Breast epithelium (tissue), 4 donors: ENCODE measurements at regions of chr13 and their contacts with region 1.

Region 1: GRCh38 chr13:31733647-31734046 is 5.7 kb upstream of the RXFP2 start:
- DNase-seq: no peak
- H3K4me3 ChIP-seq: no peak overlapping the region
- H3K27ac ChIP-seq: no peak overlapping the region
- H3K4me1 ChIP-seq: no peaks in the 10 kb centered on the region
- H3K27me3 ChIP-seq: no peaks in the 10 kb centered on the region
- CTCF ChIP-seq: no peak
- POLR2A ChIP-seq: no peak

Region 2: DNA sequence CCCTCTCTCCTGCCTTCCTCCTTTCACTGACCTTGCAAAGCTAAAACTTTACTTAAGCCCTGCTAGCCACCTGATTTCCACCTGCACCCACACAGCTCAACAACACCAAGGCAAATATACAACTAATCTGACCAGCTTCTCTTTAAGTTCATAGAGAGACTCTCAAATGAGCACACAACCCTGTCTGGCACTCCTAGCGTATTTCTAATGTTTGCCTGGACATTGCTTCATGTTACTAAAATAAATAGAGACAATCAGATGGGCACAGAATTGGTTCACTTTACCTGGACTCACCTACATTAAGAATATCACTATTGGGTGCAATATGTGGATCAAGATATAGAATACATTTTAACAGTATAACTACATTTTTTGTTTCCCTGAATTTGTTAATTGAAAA is 27.5 kb before region 1 on chr13:
- intact Hi-C with region 1: loop called (anchors 2 kb)
- DNase-seq: no peak
- H3K4me3 ChIP-seq: no peak overlapping the region
- H3K27ac ChIP-seq: no peak overlapping the region
- H3K4me1 ChIP-seq: no peaks in the 10 kb centered on the region
- H3K27me3 ChIP-seq: no peaks in the 10 kb centered on the region
- CTCF ChIP-seq: no peak
- POLR2A ChIP-seq: no peak

Region 3: GRCh38 chr13:31717583-31717982 is 16.1 kb before region 1 on chr13:
- intact Hi-C with region 1: no loop called
- DNase-seq: no peak
- H3K4me3 ChIP-seq: no peak overlapping the region
- H3K27ac ChIP-seq: peak overlapping the region in 1 of 2 donors; percentile 64
- H3K4me1 ChIP-seq: no peaks in the 10 kb centered on the region
- H3K27me3 ChIP-seq: no peaks in the 10 kb centered on the region
- CTCF ChIP-seq: no peak
- POLR2A ChIP-seq: no peak